WTC11 (cell line): ENCODE measurements at regions of chr14 and their contacts with region 1.

Region 1: GRCh38 chr14:63543000-63543825 is at the start of gene PPP2R5E:
- DNase-seq: peak; percentile 98
- ATAC-seq: peak; percentile 95
- H3K4me3 Mint-ChIP-seq: peak within 1 kb of the TSS; percentile 98
- H3K27ac Mint-ChIP-seq: peak within 1 kb of the TSS; percentile 96
- H3K4me1 Mint-ChIP-seq: peaks cover 22% of the 10 kb centered on the region
- H3K27me3 Mint-ChIP-seq: no peaks in the 10 kb centered on the region
- CTCF ChIP-seq: no peak
- total RNA-seq, gene PPP2R5E: 56.9 to 59.0 TPM (median 57.5 TPM) in 3 replicates

Region 2: DNA sequence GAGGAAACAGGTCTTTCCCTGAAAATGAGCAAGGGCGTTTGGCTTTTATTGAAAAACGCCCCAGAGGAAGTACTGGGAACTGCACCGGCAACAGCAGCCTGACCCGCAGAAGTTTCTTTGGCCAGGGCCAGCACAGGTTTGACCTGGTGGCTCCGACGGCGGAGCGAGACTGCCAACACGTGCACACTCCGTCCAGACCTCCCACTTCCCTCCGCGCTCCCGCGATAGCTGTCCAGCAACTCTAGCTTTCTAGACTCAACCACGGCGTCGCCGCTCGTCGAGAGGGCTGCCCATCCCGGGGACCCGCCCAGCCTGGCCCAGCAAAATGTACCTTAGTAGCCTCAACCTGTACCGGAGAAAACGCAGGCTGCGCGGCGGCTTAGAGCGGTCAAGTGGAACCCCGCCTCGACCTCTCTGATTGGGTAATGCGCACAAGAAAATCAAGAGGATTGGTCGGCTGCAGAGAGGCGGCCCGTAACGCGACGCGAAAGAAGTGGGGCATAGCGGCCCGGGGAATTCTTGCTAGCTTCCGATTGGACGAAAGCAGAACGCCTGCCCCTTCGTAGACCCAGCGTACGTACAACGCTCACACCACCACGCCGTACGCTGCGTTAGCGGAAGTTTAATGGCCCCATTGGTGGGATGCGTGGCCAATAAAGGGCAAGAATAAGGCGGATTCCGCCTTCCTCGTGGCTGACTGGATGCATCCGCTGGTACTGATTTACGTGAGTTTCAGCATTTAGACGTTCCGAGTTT is 98.4 kb after region 1 on chr14 and contains the start of gene WDR89:
- CTCF ChIA-PET with region 1: interaction called, 12 read pairs
- POLR2A ChIA-PET with region 1: interaction called, 11 read pairs
- DNase-seq: peak; percentile 96
- ATAC-seq: peak; percentile 94
- H3K4me3 Mint-ChIP-seq: peak within 1 kb of the TSS; percentile 78
- H3K27ac Mint-ChIP-seq: peak within 1 kb of the TSS; percentile 100
- H3K4me1 Mint-ChIP-seq: peaks cover 15% of the 10 kb centered on the region
- H3K27me3 Mint-ChIP-seq: no peaks in the 10 kb centered on the region; the same call in 1 of the 2 replicates
- CTCF ChIP-seq: peak; percentile 80
- total RNA-seq, gene WDR89: 27.2 to 28.9 TPM (median 27.5 TPM) in 3 replicates